SK-N-SH (cell line): ENCODE measurements at regions of chr7 and their contacts with region 1.

Region 1: DNA sequence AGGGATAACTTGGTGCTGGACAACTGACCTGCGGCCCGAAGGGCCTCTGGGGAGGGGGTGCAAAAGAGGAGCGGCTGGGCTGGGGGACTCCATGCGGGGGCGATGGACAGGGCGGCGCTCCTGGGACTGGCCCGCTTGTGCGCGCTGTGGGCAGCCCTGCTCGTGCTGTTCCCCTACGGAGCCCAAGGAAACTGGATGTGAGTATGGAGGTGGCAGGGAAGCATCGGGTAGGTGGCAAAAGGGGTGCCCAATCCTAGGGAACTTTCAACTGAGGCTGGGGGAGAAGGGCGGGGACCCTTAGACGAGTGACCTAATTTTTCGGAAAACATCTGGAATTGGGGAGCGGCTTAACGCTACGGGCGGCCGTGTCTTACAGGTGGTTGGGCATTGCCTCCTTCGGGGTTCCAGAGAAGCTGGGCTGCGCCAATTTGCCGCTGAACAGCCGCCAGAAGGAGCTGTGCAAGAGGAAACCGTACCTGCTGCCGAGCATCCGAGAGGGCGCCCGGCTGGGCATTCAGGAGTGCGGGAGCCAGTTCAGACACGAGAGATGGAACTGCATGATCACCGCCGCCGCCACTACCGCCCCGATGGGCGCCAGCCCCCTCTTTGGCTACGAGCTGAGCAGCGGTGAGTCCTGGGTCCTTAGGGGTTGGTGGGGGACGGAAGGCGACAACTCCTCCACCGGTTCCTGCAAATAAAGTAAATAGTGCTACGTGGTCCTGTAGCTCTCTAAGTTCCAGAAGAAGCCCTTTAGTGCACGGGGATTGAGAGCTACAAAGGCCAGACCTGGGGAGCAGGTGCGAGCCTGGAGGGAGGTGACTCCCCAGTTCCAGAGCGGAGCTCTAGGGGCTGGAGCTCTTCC is 622 bp downstream of the WNT16 start:
- DNase-seq: peak; percentile 78
- H3K4me3 ChIP-seq: peak overlapping the region; percentile 66
- H3K27ac ChIP-seq: peak overlapping the region in 1 of 2 experiments; percentile 56; a peak in 1 of 4 replicates
- H3K4me1 ChIP-seq: peaks cover 17 to 23% of the 10 kb centered on the region in 2 experiments; a peak in 3 of 4 replicates
- H3K27me3 ChIP-seq: peaks cover 50% of the 10 kb centered on the region
- CTCF ChIP-seq: peak; percentile 30
- EP300 ChIP-seq: no peak
- RAD21 ChIP-seq: peak; percentile 19; the same call in 1 of the 2 replicates

Region 2: DNA sequence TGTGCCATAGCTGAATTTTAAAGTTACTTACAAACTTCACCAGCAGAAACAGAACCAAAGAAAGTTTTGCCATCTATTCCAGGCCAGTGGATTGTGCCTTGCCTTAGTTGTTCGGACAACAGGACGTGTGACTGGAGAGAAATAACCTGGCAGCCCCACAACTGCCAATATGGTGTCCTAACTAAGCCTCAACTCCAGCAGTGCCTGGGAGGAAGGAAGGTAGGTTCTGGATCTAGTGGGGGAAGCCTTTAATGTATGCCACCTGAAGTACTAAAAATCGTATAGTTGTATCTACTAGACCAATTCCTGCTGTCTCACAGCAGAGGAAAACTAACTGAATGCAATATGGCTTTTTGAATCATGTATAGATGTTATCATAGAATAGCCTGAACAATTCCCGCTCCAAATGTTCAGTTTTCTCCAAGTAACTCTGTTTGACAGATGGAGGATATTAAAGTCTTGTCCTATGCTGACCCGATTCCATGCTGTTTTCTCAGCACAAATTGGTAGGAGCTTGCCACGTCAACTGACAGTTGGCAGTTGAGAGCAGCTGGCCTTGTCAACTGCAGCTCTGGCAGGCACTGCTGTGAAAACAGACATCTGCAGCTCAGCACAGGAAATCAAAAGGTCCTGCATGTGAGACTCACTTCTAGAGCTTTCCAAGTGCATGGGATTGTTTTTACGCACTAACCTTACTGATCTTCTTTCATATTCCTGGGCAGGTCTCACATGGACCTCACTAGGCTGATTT is 85.1 kb before region 1 on chr7:
- CTCF ChIA-PET with region 1: interaction called, 13 read pairs
- POLR2A ChIA-PET with region 1: no interaction called
- DNase-seq: peak; percentile 25
- H3K4me3 ChIP-seq: no peak overlapping the region
- H3K27ac ChIP-seq: peak overlapping the region in 1 of 2 experiments; percentile 64; a peak in 2 of 4 replicates
- H3K4me1 ChIP-seq: peaks cover 0 to 20% of the 10 kb centered on the region in 2 experiments; a peak in 2 of 4 replicates
- H3K27me3 ChIP-seq: no peaks in the 10 kb centered on the region
- CTCF ChIP-seq: no peak
- EP300 ChIP-seq: no peak; a peak in 1 of 4 replicates
- RAD21 ChIP-seq: no peak

Region 3: GRCh38 chr7:121307021-121307574 is 22.3 kb before region 1 on chr7:
- CTCF ChIA-PET with region 1: interaction called, 11 read pairs
- POLR2A ChIA-PET with region 1: no interaction called
- DNase-seq: no peak
- H3K4me3 ChIP-seq: no peak overlapping the region
- H3K27ac ChIP-seq: peak overlapping the region in 1 of 2 experiments; percentile 94; a peak in 2 of 4 replicates
- H3K4me1 ChIP-seq: peaks cover 0 to 37% of the 10 kb centered on the region in 2 experiments; a peak in 2 of 4 replicates
- H3K27me3 ChIP-seq: no peaks in the 10 kb centered on the region
- CTCF ChIP-seq: no peak
- EP300 ChIP-seq: no peak
- RAD21 ChIP-seq: no peak